A673 (cell line): ENCODE measurements at regions of chr1 and their contacts with region 1.

Region 1: DNA sequence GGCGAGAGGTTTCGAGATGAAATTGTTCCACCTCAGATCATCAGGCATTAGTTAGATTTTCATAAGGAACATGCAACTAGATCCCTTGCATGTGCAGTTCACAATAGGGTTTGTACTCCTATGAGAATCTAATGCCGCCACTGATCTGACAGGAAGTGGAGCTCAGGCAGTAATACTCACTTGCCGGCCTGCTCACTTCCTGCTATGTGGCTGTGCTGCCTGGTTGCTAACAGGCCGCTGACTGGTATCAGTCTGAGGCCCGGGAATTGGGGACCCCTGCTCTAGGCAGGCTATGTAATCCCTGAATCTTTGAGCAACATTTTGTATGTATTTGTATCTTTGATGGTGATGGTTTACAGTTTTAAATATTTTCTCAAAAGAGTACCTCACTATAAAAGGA is 32.5 kb downstream of the XKR8 start:
- DNase-seq: no peak
- H3K4me3 ChIP-seq: no peak overlapping the region
- H3K27ac ChIP-seq: no peak overlapping the region
- H3K4me1 ChIP-seq: no peaks in the 10 kb centered on the region
- H3K27me3 ChIP-seq: no peaks in the 10 kb centered on the region
- CTCF ChIP-seq: no peak

Region 2: GRCh38 chr1:27958513-27959399 is 33.5 kb before region 1 on chr1:
- CTCF ChIA-PET with region 1: no interaction called
- POLR2A ChIA-PET with region 1: interaction called, 10 read pairs
- intact Hi-C with region 1: no loop called
- DNase-seq: no peak
- H3K4me3 ChIP-seq: peak overlapping the region; percentile 84
- H3K27ac ChIP-seq: no peak overlapping the region
- H3K4me1 ChIP-seq: peaks cover 6% of the 10 kb centered on the region
- H3K27me3 ChIP-seq: no peaks in the 10 kb centered on the region
- CTCF ChIP-seq: no peak